GM12878 (cell line): ENCODE measurements at regions of chr18 and their contacts with region 1.

Region 1: DNA sequence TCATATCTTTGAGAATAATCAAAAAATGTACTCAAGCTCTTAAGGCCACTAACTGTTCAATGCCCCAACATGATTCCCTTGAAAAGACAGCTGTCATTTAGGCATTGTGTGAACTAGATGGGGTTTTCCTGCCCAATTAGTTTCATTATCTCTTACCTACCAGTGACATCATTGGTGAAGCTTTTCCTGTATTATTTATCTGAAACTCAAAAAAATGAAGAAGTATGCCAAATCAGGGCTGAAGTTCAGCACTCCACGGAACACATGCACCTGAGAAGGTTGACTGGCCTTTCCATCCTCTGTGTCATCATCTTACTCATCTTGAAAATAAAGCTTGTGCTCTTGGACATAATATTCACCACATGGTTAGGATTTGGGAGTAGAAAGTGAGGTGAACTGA is 126.4 kb downstream of the TXNL1 start:
- DNase-seq: peak; percentile 20
- ATAC-seq: peak; percentile 88
- H3K4me3 ChIP-seq: no peak overlapping the region
- H3K27ac ChIP-seq: no peak overlapping the region
- H3K4me1 ChIP-seq: no peaks in the 10 kb centered on the region
- H3K27me3 ChIP-seq: no peaks in the 10 kb centered on the region; a peak in 1 of 4 replicates
- CTCF ChIP-seq: no peak
- EP300 ChIP-seq: no peak
- POLR2A ChIP-seq: no peak
- RAD21 ChIP-seq: no peak

Region 2: GRCh38 chr18:56067969-56068671 is 443.9 kb before region 1 on chr18:
- CTCF ChIA-PET with region 1: no interaction called
- POLR2A ChIA-PET with region 1: no interaction called
- RAD21 ChIA-PET with region 1: no interaction called
- SMC1A ChIA-PET with region 1: no interaction called
- in situ Hi-C with region 1: no loop called
- intact Hi-C with region 1: no loop called
- DNase-seq: no peak
- ATAC-seq: no peak
- H3K4me3 ChIP-seq: no peak overlapping the region
- H3K27ac ChIP-seq: no peak overlapping the region
- H3K4me1 ChIP-seq: no peaks in the 10 kb centered on the region
- H3K27me3 ChIP-seq: no peaks in the 10 kb centered on the region
- CTCF ChIP-seq: no peak
- EP300 ChIP-seq: no peak
- POLR2A ChIP-seq: no peak
- RAD21 ChIP-seq: no peak

Region 3: GRCh38 chr18:56501896-56502295 is 10.1 kb before region 1 on chr18:
- CTCF ChIA-PET with region 1: interaction called, 4 read pairs
- POLR2A ChIA-PET with region 1: interaction called, 5 read pairs
- RAD21 ChIA-PET with region 1: no interaction called
- SMC1A ChIA-PET with region 1: interaction called, 10 read pairs
- in situ Hi-C with region 1: no loop called
- intact Hi-C with region 1: no loop called
- DNase-seq: no peak
- ATAC-seq: no peak
- H3K4me3 ChIP-seq: no peak overlapping the region
- H3K27ac ChIP-seq: no peak overlapping the region
- H3K4me1 ChIP-seq: no peaks in the 10 kb centered on the region
- H3K27me3 ChIP-seq: no peaks in the 10 kb centered on the region
- CTCF ChIP-seq: no peak
- EP300 ChIP-seq: no peak
- POLR2A ChIP-seq: no peak
- RAD21 ChIP-seq: no peak

Region 4: DNA sequence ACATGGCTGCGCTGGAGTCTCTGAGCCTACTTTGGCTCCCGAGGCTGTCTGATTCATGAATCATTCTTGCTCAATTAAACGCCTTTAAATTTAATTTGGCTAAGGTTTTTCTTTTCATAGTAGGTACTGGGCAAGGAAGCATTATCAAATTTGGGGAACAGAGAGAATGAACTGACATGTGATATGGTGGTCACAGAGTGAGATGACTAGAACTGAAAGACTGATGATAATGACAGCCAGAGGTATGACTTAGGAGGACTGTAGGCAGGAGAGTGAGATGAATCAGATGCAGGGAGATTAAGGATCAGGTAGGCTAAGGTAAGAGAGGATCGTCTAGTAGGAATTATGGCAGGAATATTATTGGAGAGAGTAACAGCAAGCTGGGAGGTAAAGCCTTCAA is 799.5 kb after region 1 on chr18:
- CTCF ChIA-PET with region 1: no interaction called
- POLR2A ChIA-PET with region 1: no interaction called
- RAD21 ChIA-PET with region 1: no interaction called
- SMC1A ChIA-PET with region 1: no interaction called
- in situ Hi-C with region 1: no loop called
- intact Hi-C with region 1: no loop called
- DNase-seq: no peak
- ATAC-seq: peak; percentile 75
- H3K4me3 ChIP-seq: no peak overlapping the region
- H3K27ac ChIP-seq: no peak overlapping the region
- H3K4me1 ChIP-seq: no peaks in the 10 kb centered on the region
- H3K27me3 ChIP-seq: no peaks in the 10 kb centered on the region
- CTCF ChIP-seq: no peak
- EP300 ChIP-seq: no peak
- POLR2A ChIP-seq: no peak
- RAD21 ChIP-seq: no peak